ENCODE measurements at regions of chr11 and their contacts with region 1.

Region 1: DNA sequence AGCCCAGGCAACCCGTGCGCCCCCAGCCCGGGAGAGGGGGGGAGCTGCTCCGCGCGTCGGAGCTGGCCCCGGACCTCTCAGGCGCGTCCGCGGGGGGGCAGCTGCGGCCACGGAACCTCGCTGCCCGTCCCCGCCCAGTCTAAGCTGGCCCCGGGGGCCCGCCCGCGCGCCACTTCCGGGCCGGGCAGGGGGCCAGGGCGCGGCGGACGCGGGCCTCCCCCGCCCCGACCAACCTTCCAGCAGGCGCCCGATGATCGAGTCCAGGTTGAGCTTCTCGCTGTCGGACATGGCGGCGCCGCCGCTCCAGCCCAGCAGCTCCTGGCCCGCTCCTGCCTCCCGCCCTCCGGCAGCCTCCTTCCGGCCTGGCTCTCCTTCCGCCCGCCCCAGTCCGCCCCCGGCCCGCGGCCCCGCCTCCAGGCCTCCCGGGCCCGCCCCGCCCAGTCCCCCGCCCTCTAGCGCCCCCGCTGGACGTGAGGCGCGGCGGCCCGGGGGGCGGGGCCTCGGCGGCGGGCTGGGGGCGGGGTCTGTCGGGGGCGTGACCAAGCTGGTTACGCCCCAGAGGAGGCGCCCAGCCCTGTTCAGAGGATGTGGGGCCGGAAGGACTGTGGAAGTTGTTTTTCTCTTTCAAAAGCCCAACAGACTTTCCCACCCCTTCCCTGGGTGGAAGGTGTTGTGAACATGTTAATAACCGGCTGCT is at the start of gene PPP1CA:
- DNase-seq: peak; percentile 97
- ATAC-seq: peak; percentile 67
- H3K4me3 Mint-ChIP-seq: peak within 1 kb of the TSS; percentile 82
- H3K27ac Mint-ChIP-seq: peak within 1 kb of the TSS; percentile 87
- H3K4me1 Mint-ChIP-seq: peaks cover 52% of the 10 kb centered on the region
- H3K27me3 Mint-ChIP-seq: no peaks in the 10 kb centered on the region
- total RNA-seq, gene PPP1CA: 199 to 227 TPM

Region 2: GRCh38 chr11:67118801-67119584 is 282.6 kb before region 1 on chr11 and contains the start of gene KDM2A:
- CTCF ChIA-PET with region 1: no interaction called
- POLR2A ChIA-PET with region 1: no interaction called
- intact Hi-C with region 1: loop called in 1 of 2 experiments (anchors 5 kb)
- DNase-seq: peak; percentile 100
- ATAC-seq: peak; percentile 85
- H3K4me3 Mint-ChIP-seq: peak within 1 kb of the TSS; percentile 98
- H3K27ac Mint-ChIP-seq: peak within 1 kb of the TSS; percentile 83
- H3K4me1 Mint-ChIP-seq: peaks cover 28% of the 10 kb centered on the region
- H3K27me3 Mint-ChIP-seq: no peaks in the 10 kb centered on the region
- total RNA-seq, gene KDM2A: 74.8 to 89.7 TPM

Region 3: DNA sequence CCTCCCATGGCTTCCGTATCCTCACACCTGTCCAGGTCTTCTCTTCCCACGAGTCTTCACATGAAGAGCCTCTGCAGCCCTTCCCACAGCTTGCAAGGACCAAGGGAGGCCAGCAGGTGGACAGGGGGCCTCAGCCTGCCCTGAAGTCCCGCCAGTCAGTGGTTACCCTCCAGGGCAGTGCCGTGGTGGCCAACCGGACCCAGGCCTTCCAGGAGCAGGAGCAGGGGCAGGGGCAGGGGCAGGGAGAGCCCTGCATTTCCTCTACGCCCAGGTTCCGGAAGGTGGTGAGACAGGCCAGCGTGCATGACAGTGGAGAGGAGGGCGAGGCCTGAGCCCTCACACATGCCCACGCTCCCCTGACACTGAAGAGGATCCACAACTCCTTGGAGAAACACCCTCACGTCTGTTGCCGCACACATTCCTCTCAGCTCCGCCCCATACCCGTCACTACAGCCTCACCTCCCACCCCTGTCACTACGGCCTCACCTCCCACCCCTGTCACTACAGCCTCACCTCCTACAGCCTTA is 90.0 kb before region 1 on chr11:
- CTCF ChIA-PET with region 1: no interaction called
- POLR2A ChIA-PET with region 1: no interaction called
- intact Hi-C with region 1: no loop called
- DNase-seq: no peak
- ATAC-seq: no peak
- H3K4me3 Mint-ChIP-seq: no peak overlapping the region
- H3K27ac Mint-ChIP-seq: no peak overlapping the region
- H3K4me1 Mint-ChIP-seq: peaks cover 29% of the 10 kb centered on the region
- H3K27me3 Mint-ChIP-seq: no peaks in the 10 kb centered on the region

Region 4: GRCh38 chr11:67391304-67392132 is 10.1 kb before region 1 on chr11 and contains the start of gene RAD9A:
- CTCF ChIA-PET with region 1: interaction called, 9 read pairs
- POLR2A ChIA-PET with region 1: interaction called, 7 read pairs
- intact Hi-C with region 1: loop called (anchors 1 kb)
- DNase-seq: peak; percentile 97
- ATAC-seq: peak; percentile 74
- H3K4me3 Mint-ChIP-seq: peak within 1 kb of the TSS; percentile 89
- H3K27ac Mint-ChIP-seq: peak within 1 kb of the TSS; percentile 80
- H3K4me1 Mint-ChIP-seq: peaks cover 34% of the 10 kb centered on the region
- H3K27me3 Mint-ChIP-seq: no peaks in the 10 kb centered on the region
- total RNA-seq, gene RAD9A: 28.8 to 30.0 TPM

Region 5: GRCh38 chr11:67428052-67428914 is 26.6 kb after region 1 on chr11 and contains the start of gene RPS6KB2:
- CTCF ChIA-PET with region 1: interaction called, 7 read pairs
- POLR2A ChIA-PET with region 1: no interaction called
- intact Hi-C with region 1: loop called in 1 of 2 experiments (anchors 1 kb)
- DNase-seq: peak; percentile 99
- ATAC-seq: peak; percentile 81
- H3K4me3 Mint-ChIP-seq: peak within 1 kb of the TSS; percentile 90
- H3K27ac Mint-ChIP-seq: peak within 1 kb of the TSS; percentile 98
- H3K4me1 Mint-ChIP-seq: peaks cover 37% of the 10 kb centered on the region
- H3K27me3 Mint-ChIP-seq: no peaks in the 10 kb centered on the region
- total RNA-seq, gene RPS6KB2: 53.4 to 57.2 TPM

Region 6: GRCh38 chr11:67452141-67452952 is 50.7 kb after region 1 on chr11 and contains the start of gene GPR152:
- CTCF ChIA-PET with region 1: no interaction called
- POLR2A ChIA-PET with region 1: no interaction called
- intact Hi-C with region 1: no loop called
- DNase-seq: no peak
- ATAC-seq: no peak
- H3K4me3 Mint-ChIP-seq: no peak within 1 kb of the TSS
- H3K27ac Mint-ChIP-seq: no peak within 1 kb of the TSS
- H3K4me1 Mint-ChIP-seq: peaks cover 22% of the 10 kb centered on the region
- H3K27me3 Mint-ChIP-seq: no peaks in the 10 kb centered on the region
- total RNA-seq, gene GPR152: not detected

Region 7: DNA sequence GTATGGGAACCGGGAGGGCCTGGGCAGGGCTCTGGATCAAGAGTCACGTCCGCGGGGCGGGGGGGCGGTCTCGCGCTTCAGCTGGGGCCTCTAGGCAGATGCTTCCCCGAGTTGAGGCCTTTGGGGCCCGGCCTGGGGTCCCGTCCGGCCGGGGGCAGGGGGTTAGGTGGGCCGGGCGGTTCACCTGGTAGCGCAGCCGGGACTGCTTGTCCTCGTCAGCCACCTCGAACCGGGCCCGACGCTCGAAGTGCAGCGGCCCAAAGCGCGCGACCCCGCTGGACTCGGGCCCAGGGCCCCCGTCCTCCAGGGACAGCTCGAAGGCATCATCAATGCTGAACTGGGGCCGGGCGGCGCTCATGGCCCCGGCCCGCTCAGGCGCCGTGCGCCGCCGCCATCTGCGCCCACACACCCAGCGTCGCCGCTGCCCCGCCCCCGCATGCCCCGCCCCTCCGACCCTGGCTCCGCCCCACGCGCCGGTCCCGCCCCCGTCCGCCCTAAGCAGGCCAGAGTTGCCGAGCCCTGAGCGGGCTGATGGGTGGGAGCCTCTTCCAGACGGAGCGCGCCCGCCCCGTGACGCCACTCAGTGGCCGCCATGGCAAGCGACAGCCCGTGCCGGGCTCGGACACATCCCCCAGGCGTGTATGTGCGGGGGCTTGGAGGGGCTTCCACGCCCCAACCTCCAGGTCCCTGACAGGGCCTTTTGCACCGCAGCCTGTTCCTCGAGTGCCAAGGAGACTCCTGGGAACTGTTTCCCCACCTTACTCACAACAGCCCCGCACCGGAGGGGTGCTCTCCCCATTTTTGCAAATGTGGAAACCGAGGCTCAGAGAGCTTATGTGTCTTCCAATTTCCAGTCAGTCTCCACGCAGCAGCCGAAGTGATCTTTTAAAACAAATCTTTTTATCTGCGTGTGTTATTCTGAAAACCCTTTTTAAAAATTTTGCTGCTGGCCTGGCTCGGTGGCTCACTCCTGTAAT is 67.5 kb after region 1 on chr11 and contains the start of gene TMEM134:
- CTCF ChIA-PET with region 1: interaction called, 4 read pairs
- POLR2A ChIA-PET with region 1: interaction called, 4 read pairs
- intact Hi-C with region 1: loop called (anchors 1 kb)
- DNase-seq: peak; percentile 97
- ATAC-seq: peak; percentile 78
- H3K4me3 Mint-ChIP-seq: peak within 1 kb of the TSS; percentile 82
- H3K27ac Mint-ChIP-seq: peak within 1 kb of the TSS; percentile 86
- H3K4me1 Mint-ChIP-seq: peaks cover 23% of the 10 kb centered on the region
- H3K27me3 Mint-ChIP-seq: no peaks in the 10 kb centered on the region
- total RNA-seq, gene TMEM134: 69.9 to 74.7 TPM

Region 8: GRCh38 chr11:67606492-67607201 is 205.0 kb after region 1 on chr11 and contains the start of gene NDUFV1:
- CTCF ChIA-PET with region 1: no interaction called
- POLR2A ChIA-PET with region 1: no interaction called
- intact Hi-C with region 1: loop called in 1 of 2 experiments (anchors 1 kb)
- DNase-seq: peak; percentile 98
- ATAC-seq: peak; percentile 100
- H3K4me3 Mint-ChIP-seq: peak within 1 kb of the TSS; percentile 92
- H3K27ac Mint-ChIP-seq: peak within 1 kb of the TSS; percentile 90
- H3K4me1 Mint-ChIP-seq: peaks cover 16% of the 10 kb centered on the region
- H3K27me3 Mint-ChIP-seq: peaks cover 9% of the 10 kb centered on the region
- total RNA-seq, gene NDUFV1: 253 to 287 TPM

Region 9: GRCh38 chr11:68121067-68121899 is 719.6 kb after region 1 on chr11 and contains the start of gene CHKA:
- CTCF ChIA-PET with region 1: no interaction called
- POLR2A ChIA-PET with region 1: no interaction called
- intact Hi-C with region 1: loop called in 1 of 2 experiments (anchors 10 kb)
- DNase-seq: peak; percentile 94
- ATAC-seq: peak; percentile 97
- H3K4me3 Mint-ChIP-seq: peak within 1 kb of the TSS; percentile 71
- H3K27ac Mint-ChIP-seq: peak within 1 kb of the TSS; percentile 68
- H3K4me1 Mint-ChIP-seq: peaks cover 7% of the 10 kb centered on the region
- H3K27me3 Mint-ChIP-seq: no peaks in the 10 kb centered on the region
- total RNA-seq, gene CHKA: 5.5 to 7.5 TPM